IMR-90 (cell line): ENCODE measurements at regions of chr12 and their contacts with region 1.

Region 1: GRCh38 chr12:80195074-80195726 is 95.9 kb downstream of the OTOGL start:
- DNase-seq: peak; percentile 86
- ATAC-seq: peak; percentile 91
- H3K4me3 ChIP-seq: no peak overlapping the region
- H3K27ac ChIP-seq: no peak overlapping the region
- H3K4me1 ChIP-seq: peaks cover 3% of the 10 kb centered on the region; the same call in 1 of the 2 replicates
- H3K27me3 ChIP-seq: no peaks in the 10 kb centered on the region
- CTCF ChIP-seq: peak; percentile 82
- POLR2A ChIP-seq: no peak
- RAD21 ChIP-seq: peak; percentile 75

Region 2: GRCh38 chr12:80205960-80206359 is 10.8 kb after region 1 on chr12:
- CTCF ChIA-PET with region 1: interaction called, 10 read pairs
- POLR2A ChIA-PET with region 1: no interaction called
- dilution Hi-C with region 1: no loop called
- in situ Hi-C with region 1: no loop called
- intact Hi-C with region 1: no loop called
- DNase-seq: no peak
- ATAC-seq: no peak
- H3K4me3 ChIP-seq: no peak overlapping the region
- H3K27ac ChIP-seq: no peak overlapping the region
- H3K4me1 ChIP-seq: no peaks in the 10 kb centered on the region
- H3K27me3 ChIP-seq: no peaks in the 10 kb centered on the region
- CTCF ChIP-seq: no peak
- POLR2A ChIP-seq: no peak
- RAD21 ChIP-seq: no peak

Region 3: DNA sequence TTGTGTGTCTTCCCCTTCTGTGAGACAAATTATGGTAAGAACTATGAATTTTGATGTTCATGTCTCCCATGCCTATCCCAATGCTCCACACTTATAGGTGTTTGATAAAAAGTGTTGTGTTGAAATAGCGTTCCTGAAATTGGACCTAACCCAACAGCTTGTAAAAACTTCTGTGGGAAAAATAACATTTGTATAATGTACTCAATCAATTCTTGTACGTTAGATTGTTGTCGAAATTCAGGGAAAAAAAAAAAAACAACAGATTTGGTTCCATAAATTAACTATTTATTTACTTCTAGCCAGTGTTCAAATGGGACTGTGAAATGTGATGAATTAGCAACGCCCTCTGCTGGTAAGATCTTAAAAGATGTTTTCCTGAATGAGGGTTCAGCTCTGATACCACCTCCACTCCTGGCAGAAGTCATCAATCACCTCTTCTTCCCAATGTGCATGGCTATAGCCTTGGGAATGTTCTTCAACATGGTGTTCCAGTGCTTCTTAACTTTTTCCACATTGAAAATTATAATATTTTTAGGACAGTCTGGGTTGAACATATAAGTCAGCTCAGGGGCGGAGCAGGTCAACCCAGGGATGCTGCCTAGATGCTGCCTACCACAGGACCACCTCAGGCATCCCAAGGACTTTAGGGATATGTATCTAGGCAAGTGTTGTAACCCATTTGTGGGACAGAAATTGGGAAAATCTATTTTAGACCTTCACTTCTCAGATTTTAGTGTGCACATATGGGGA is 74.8 kb after region 1 on chr12:
- CTCF ChIA-PET with region 1: interaction called, 46 read pairs
- POLR2A ChIA-PET with region 1: no interaction called
- dilution Hi-C with region 1: no loop called
- in situ Hi-C with region 1: loop called (anchors 5 kb)
- intact Hi-C with region 1: loop called (anchors 1 kb)
- DNase-seq: peak; percentile 60
- ATAC-seq: peak; percentile 64
- H3K4me3 ChIP-seq: no peak overlapping the region
- H3K27ac ChIP-seq: no peak overlapping the region
- H3K4me1 ChIP-seq: peaks cover 4% of the 10 kb centered on the region
- H3K27me3 ChIP-seq: no peaks in the 10 kb centered on the region
- CTCF ChIP-seq: peak; percentile 70
- POLR2A ChIP-seq: no peak
- RAD21 ChIP-seq: peak; percentile 66

Region 4: DNA sequence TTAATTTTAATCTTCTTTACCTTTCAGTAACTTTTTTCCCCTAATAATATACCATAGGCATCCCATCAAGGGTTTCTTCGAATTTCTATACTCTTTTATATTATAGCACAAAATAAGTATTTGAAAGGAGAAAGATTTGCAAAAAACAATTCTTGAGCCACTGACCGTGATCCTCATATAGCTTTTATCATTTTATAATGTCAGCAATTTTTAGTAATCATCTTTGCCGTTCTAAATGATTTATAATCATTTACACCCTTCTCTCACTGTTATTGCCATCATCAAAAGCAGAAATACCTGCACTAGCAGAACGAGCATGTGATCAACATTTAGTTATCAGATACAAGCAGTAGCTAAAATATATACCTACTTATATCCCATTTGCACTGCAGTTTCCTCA is 265.8 kb after region 1 on chr12:
- CTCF ChIA-PET with region 1: no interaction called
- POLR2A ChIA-PET with region 1: no interaction called
- dilution Hi-C with region 1: no loop called
- in situ Hi-C with region 1: no loop called
- intact Hi-C with region 1: no loop called
- DNase-seq: no peak
- ATAC-seq: no peak
- H3K4me3 ChIP-seq: no peak overlapping the region
- H3K27ac ChIP-seq: no peak overlapping the region
- H3K4me1 ChIP-seq: no peaks in the 10 kb centered on the region
- H3K27me3 ChIP-seq: no peaks in the 10 kb centered on the region
- CTCF ChIP-seq: no peak
- POLR2A ChIP-seq: no peak
- RAD21 ChIP-seq: no peak

Region 5: DNA sequence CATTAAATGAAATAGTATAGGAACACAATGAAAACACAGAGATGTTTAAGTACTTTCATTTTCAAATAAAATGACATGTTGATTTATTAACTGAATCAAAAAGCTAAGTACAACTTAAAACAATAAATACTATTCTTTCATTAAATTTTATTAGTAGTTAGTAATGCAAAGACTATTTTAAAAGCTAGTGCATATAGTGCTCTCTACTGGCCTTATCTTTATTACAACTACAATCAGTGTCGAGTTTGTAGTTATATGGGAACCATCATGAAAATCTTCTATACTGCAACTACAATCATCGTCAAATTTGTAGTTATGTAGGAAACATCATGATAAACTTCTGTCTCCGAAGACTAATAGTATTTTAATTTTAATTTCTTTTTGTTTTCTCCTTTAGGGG is 751.4 kb after region 1 on chr12:
- CTCF ChIA-PET with region 1: interaction called, 3 read pairs
- POLR2A ChIA-PET with region 1: no interaction called
- dilution Hi-C with region 1: no loop called
- in situ Hi-C with region 1: loop called (anchors 10 kb)
- intact Hi-C with region 1: loop called (anchors 5 kb)
- DNase-seq: peak; percentile 32
- ATAC-seq: peak; percentile 85
- H3K4me3 ChIP-seq: no peak overlapping the region
- H3K27ac ChIP-seq: no peak overlapping the region
- H3K4me1 ChIP-seq: no peaks in the 10 kb centered on the region
- H3K27me3 ChIP-seq: no peaks in the 10 kb centered on the region
- CTCF ChIP-seq: peak; percentile 55
- POLR2A ChIP-seq: no peak
- RAD21 ChIP-seq: peak; percentile 62

Region 6: DNA sequence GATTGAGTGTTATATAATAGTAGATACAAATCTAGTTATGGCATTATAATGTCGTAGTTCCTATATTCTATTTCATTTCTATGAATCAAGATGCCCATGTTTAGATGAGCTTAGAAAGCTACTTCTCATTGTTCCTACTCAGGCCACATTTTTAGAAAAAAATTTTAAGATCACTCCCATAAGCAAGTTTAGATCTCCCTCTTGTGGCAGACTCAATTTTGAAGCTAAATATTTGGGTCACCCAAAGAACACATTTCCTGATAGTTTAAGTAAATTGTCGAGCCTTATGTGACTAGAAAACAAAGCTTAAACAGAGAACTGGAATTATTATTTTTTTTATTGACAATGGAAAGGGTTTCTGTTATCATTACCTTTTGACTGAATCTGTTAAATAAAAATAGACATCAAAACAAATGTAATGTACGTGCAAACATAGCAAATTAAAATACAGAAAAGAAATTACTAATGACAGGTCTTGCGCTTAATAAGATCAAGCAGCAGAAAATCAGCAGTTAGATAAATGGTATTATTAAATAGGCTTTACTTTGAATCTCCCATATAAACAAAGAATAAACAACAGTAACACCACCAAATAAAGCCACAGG is 1062.8 kb after region 1 on chr12:
- CTCF ChIA-PET with region 1: interaction called, 9 read pairs
- POLR2A ChIA-PET with region 1: no interaction called
- dilution Hi-C with region 1: no loop called
- in situ Hi-C with region 1: no loop called
- intact Hi-C with region 1: loop called (anchors 5 kb)
- DNase-seq: peak; percentile 47
- ATAC-seq: peak; percentile 59; the same call in 1 of the 2 replicates
- H3K4me3 ChIP-seq: no peak overlapping the region
- H3K27ac ChIP-seq: no peak overlapping the region
- H3K4me1 ChIP-seq: no peaks in the 10 kb centered on the region
- H3K27me3 ChIP-seq: no peaks in the 10 kb centered on the region
- CTCF ChIP-seq: peak; percentile 55
- POLR2A ChIP-seq: no peak
- RAD21 ChIP-seq: peak; percentile 68